ENCODE measurements at regions of chr19 and their contacts with region 1.

Region 1: DNA sequence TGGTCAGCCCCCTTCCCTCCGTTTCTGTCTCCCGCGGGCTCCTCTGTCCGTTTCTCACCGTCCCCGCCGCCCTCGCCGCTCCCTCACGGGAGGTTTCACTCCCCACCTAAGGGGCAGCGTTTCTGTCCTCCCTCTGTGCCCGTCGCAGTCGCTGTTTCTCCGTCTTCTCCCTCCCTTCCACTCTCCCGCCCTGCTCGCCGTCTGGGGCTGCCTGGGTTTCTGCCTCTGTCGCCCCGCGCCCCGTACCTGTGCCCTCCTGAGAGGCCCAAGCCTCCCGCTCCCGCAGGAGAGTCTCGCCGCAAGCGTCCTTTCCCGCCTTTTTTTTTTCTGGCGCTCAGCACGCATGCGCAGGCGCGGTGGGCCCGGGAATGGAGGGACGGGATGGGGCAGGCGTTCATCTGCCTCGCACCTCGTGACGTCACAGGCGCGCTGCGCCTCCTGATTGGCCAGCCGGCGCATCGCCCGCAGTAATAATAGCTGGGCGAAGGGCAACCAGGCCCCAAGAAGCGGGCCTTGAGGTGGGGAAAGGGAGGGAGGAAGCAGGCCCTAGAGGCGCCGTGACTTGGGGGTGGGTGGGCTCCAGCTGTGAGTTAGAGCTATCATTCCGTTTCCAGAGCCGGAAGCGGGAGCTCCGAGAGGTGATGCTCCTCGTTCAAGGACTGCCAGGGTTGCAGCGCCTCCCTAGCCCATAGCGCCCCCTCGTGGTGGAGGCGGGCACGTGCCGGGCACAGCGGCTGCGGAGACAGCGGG is 15.4 kb downstream of the SSC5D start:
- DNase-seq: peak; percentile 96

Region 2: GRCh38 chr19:55467236-55468053 is 36.2 kb before region 1 on chr19:
- intact Hi-C with region 1: loop called (anchors 1 kb)
- DNase-seq: no peak

Measured in cardiac septum (tissue), 1 donor.